MCF 10A (cell line): ENCODE measurements at regions of chr15 and their contacts with region 1.

Region 1: GRCh38 chr15:38072348-38073177 is 138.1 kb downstream of the TMCO5A start:
- DNase-seq: peak; percentile 82
- H3K4me3 Mint-ChIP-seq: peak overlapping the region; percentile 77
- H3K27ac Mint-ChIP-seq: peak overlapping the region; percentile 88
- H3K4me1 Mint-ChIP-seq: peaks cover 18% of the 10 kb centered on the region
- H3K27me3 Mint-ChIP-seq: no peaks in the 10 kb centered on the region
- CTCF ChIP-seq: peak; percentile 21

Region 2: DNA sequence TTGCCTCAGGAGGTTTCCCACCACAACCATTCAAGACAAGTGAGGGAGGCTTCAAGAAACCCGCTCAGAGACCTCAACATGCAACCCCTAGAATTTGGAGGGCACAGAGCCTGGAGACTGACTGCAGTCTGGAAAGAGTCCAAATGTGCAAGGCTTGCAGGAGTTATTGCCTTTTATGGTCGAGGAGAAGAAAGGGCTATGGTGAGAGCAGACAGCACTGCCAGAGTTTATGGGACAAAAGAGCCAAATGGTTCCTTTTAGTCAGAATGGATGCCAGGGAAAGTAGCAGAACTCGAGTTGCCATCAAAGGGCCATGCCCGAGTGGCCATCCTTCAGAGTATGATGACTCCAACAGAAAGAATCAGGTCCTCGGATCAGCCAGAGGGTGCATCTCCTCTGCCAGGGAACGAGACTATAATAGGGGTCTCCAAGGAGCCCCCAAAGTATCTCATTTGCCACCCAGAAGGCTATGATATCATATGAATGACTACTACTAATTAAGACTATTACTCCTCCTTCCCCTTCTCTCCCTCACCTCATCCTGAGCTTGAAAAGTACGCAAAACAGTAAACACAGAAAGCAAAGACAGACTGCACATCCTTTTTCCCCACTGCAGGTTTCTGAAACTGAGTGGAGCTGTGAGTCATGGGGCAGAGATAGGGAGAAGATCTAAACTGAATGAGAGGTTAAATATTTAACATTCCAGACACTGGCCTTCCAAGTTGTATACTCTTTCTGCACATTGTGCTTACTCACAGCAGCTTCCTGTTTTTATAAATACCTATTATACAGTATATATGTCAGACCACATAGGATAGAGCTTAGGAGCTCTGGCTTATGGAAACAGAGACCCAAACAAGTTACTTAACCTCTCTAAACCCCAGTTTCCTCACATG is 172.0 kb before region 1 on chr15:
- CTCF ChIA-PET with region 1: no interaction called
- POLR2A ChIA-PET with region 1: no interaction called
- intact Hi-C with region 1: no loop called
- DNase-seq: peak; percentile 29
- H3K4me3 Mint-ChIP-seq: no peak overlapping the region
- H3K27ac Mint-ChIP-seq: no peak overlapping the region
- H3K4me1 Mint-ChIP-seq: peaks cover 8% of the 10 kb centered on the region
- H3K27me3 Mint-ChIP-seq: peaks cover 18% of the 10 kb centered on the region
- CTCF ChIP-seq: no peak

Region 3: GRCh38 chr15:38129531-38130204 is 57.1 kb after region 1 on chr15:
- CTCF ChIA-PET with region 1: interaction called, 4 read pairs
- POLR2A ChIA-PET with region 1: interaction called, 23 read pairs
- intact Hi-C with region 1: loop called (anchors 1 kb)
- DNase-seq: peak; percentile 99
- H3K4me3 Mint-ChIP-seq: peak overlapping the region; percentile 70
- H3K27ac Mint-ChIP-seq: peak overlapping the region; percentile 76
- H3K4me1 Mint-ChIP-seq: peaks cover 29% of the 10 kb centered on the region
- H3K27me3 Mint-ChIP-seq: no peaks in the 10 kb centered on the region
- CTCF ChIP-seq: no peak